Psoas muscle (tissue), 8 donors: ENCODE measurements at regions of chr7 and their contacts with region 1.

Region 1: DNA sequence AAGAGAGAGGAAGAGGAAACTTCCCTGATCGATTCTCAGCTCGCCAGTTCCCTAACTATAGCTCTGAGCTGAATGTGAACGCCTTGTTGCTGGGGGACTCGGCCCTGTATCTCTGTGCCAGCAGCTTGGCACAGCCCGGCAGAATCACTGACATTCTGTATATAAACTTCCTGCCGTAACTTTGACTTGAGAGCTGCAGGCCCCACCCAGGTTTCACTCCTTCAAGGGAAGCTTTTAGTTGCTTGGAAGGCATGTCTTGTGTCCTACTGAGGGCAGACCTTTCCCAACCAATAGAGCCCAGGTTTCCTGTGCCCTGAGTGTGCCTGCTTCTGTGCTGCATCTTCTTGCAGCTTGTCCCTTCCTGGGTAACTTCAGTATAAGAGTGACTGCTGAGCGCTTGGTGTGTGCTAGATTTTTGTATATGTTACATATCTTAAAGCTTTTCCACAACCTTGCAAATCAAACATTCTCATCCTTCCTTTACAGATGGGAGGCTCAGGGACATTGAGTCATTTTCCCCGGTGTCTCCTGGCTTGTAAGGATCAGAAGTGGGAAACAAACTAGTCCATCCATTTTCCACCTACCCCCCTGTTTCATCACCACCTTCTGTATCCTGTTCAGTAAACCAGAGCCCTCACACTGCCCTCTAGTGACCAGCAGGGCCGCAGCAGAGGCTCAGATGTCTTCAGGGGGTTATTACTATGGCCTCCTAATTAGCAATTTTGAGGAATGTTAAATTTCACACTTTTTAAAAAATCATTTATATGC is 225.2 kb upstream of the PRSS58 start:
- DNase-seq: peak; percentile 32 to 62
- ATAC-seq: peak; percentile 52 to 83 (median 78)
- H3K4me3 ChIP-seq: no peak overlapping the region
- H3K27ac ChIP-seq: no peak overlapping the region
- H3K4me1 ChIP-seq: peaks cover 3% of the 10 kb centered on the region
- H3K27me3 ChIP-seq: no peaks in the 10 kb centered on the region
- CTCF ChIP-seq: peak; percentile 70

Region 2: GRCh38 chr7:142420559-142421362 is 62.3 kb before region 1 on chr7:
- intact Hi-C with region 1: loop called in 1 of 2 experiments (anchors 5 kb)
- DNase-seq: no peak
- ATAC-seq: peak in 2 of 4 donors; percentile 59 to 63
- H3K4me3 ChIP-seq: no peak overlapping the region
- H3K27ac ChIP-seq: no peak overlapping the region
- H3K4me1 ChIP-seq: no peaks in the 10 kb centered on the region
- H3K27me3 ChIP-seq: no peaks in the 10 kb centered on the region
- CTCF ChIP-seq: peak; percentile 32

Region 3: GRCh38 chr7:142459551-142459963 is 23.5 kb before region 1 on chr7:
- intact Hi-C with region 1: no loop called
- DNase-seq: no peak
- ATAC-seq: peak; percentile 75 to 90 (median 82)
- H3K4me3 ChIP-seq: no peak overlapping the region
- H3K27ac ChIP-seq: no peak overlapping the region
- H3K4me1 ChIP-seq: peaks cover 7% of the 10 kb centered on the region
- H3K27me3 ChIP-seq: no peaks in the 10 kb centered on the region
- CTCF ChIP-seq: peak; percentile 66